ENCODE measurements at regions of chr3 and their contacts with region 1.

Region 1: GRCh38 chr3:183635431-183636220 is at the start of gene KLHL24:
- DNase-seq: peak; percentile 94
- ATAC-seq: peak; percentile 92 to 95
- total RNA-seq, gene KLHL24: 92.9 to 138 TPM

Region 2: DNA sequence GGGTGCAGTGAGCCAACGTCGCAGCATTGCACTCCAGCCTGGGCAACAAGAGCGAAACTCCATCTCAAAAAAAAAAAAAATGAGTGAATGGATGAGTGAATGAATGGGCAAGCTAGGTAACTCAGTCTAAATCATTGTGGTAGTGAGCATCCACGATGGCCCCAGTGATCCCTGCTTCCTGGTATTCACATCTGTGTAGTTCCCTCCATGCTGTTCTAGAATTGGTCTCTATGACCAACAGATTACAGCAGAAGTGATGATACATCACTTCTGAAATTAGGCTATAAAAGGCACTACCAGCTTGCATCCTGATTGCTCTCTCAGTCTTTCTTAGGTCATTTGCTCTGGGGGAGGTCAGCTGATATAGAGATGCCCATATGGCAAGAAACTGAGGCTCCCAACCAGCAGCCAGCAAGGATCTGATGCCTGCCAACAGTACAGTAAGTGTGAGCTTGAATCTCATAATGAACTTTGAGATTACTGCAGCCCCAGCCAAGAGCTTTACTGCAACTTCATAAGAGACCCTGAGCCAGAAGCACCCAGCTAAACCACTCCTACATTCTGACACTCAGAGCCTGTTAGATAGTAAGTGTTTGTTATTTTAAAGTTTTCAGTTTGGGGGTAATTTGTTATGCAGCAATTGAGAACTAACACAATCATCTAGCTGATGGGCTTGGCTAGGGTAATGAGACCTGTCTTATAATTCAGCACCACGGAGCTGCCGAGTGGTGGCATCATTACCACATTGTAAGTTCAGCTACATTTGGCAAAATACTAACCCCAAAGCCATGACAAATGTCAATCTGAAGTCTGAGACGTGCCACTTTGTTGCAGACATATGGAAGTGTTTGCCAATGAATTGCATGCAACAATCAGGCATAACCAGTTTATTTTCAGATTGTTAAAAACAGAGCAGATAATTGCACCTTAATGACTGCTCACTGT is 133.1 kb before region 1 on chr3:
- intact Hi-C with region 1: loop called in 1 of 2 experiments (anchors 10 kb)
- DNase-seq: peak; percentile 38
- ATAC-seq: peak; percentile 61 to 84